ENCODE measurements at regions of chr4 and their contacts with region 1.

Region 1: GRCh38 chr4:152535903-152536544 is at the start of gene FBXW7:
- DNase-seq: peak; percentile 98 to 100 (median 100)
- H3K4me3 ChIP-seq: peak within 1 kb of the TSS; percentile 94
- H3K4me3 Mint-ChIP-seq: peak within 1 kb of the TSS; percentile 89 to 98 (median 96)
- H3K27ac ChIP-seq: peak within 1 kb of the TSS; percentile 98
- H3K27ac Mint-ChIP-seq: peak within 1 kb of the TSS; percentile 96 to 100 (median 99)
- H3K4me1 ChIP-seq: peaks cover 52% of the 10 kb centered on the region
- H3K4me1 Mint-ChIP-seq: peaks cover 68 to 75% (median 73%) of the 10 kb centered on the region in 3 donors
- H3K27me3 ChIP-seq: no peaks in the 10 kb centered on the region
- H3K27me3 Mint-ChIP-seq: peaks cover 0 to 7% of the 10 kb centered on the region in 2 donors
- total RNA-seq, gene FBXW7: 46.6 to 54.3 TPM

Region 2: GRCh38 chr4:152448038-152448707 is 87.9 kb before region 1 on chr4:
- CTCF ChIA-PET with region 1: no interaction called
- POLR2A ChIA-PET with region 1: no interaction called
- DNase-seq: no peak
- H3K4me3 ChIP-seq: no peak overlapping the region
- H3K4me3 Mint-ChIP-seq: peak overlapping the region in 1 of 7 donors; percentile 20
- H3K27ac ChIP-seq: no peak overlapping the region
- H3K27ac Mint-ChIP-seq: no peak overlapping the region
- H3K4me1 ChIP-seq: peaks cover 4% of the 10 kb centered on the region
- H3K4me1 Mint-ChIP-seq: peaks cover 34 to 52% (median 49%) of the 10 kb centered on the region in 3 donors
- H3K27me3 ChIP-seq: no peaks in the 10 kb centered on the region
- H3K27me3 Mint-ChIP-seq: no peaks in the 10 kb centered on the region

Region 3: GRCh38 chr4:152554742-152555141 is 18.7 kb after region 1 on chr4:
- CTCF ChIA-PET with region 1: interaction called, 28 read pairs
- POLR2A ChIA-PET with region 1: interaction called, 41 read pairs
- DNase-seq: no peak
- H3K4me3 ChIP-seq: peak overlapping the region; percentile 31
- H3K4me3 Mint-ChIP-seq: peak overlapping the region in 5 of 7 donors; percentile 38 to 74 (median 52)
- H3K27ac ChIP-seq: no peak overlapping the region
- H3K27ac Mint-ChIP-seq: peak overlapping the region; percentile 53 to 99 (median 92)
- H3K4me1 ChIP-seq: peaks cover 33% of the 10 kb centered on the region
- H3K4me1 Mint-ChIP-seq: peaks cover 32 to 62% (median 45%) of the 10 kb centered on the region in 3 donors
- H3K27me3 ChIP-seq: no peaks in the 10 kb centered on the region
- H3K27me3 Mint-ChIP-seq: peaks cover 0 to 1% of the 10 kb centered on the region in 2 donors

Region 4: DNA sequence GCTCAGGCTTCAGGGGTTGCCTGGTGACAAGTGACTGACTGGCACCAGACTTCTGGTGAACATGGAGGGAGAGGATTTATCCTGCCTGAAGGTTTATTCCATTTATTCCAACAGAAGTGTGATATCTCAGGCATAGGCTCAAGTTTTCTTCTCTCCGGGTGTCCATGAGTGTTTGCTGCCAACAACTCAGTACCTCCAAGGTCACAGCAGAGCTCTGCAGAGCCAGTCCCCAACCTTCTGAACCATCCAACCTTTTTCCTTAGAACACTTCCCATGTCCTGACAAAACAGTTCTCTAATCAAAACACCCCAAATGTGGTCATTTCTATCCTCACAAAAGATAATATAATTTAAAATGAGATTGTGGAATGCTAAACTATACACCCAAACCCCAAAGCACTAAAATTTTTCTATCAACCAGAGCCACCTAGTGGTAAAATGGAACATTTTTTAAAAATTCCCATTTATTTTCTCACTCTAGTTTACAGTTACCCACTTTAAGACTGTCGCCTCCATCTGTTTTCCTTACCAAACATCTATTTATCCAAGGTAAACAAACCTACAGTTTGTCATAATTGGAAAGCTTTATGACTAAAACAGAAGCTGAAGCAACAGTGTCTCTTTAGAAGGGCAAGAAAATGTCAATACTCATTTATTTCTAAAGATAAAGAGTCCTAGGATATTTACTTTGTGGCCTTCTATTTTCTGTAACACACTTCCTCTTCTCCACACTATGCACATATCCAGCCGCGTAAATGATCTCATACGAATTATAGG is 104.2 kb after region 1 on chr4:
- CTCF ChIA-PET with region 1: interaction called, 8 read pairs
- POLR2A ChIA-PET with region 1: interaction called, 13 read pairs
- DNase-seq: peak in 2 of 5 donors; percentile 12 to 29
- H3K4me3 ChIP-seq: no peak overlapping the region
- H3K4me3 Mint-ChIP-seq: no peak overlapping the region
- H3K27ac ChIP-seq: no peak overlapping the region
- H3K27ac Mint-ChIP-seq: peak overlapping the region in 1 of 8 donors; percentile 48
- H3K4me1 ChIP-seq: peaks cover 9% of the 10 kb centered on the region
- H3K4me1 Mint-ChIP-seq: peaks cover 18 to 26% (median 24%) of the 10 kb centered on the region in 3 donors
- H3K27me3 ChIP-seq: no peaks in the 10 kb centered on the region
- H3K27me3 Mint-ChIP-seq: no peaks in the 10 kb centered on the region

Region 5: DNA sequence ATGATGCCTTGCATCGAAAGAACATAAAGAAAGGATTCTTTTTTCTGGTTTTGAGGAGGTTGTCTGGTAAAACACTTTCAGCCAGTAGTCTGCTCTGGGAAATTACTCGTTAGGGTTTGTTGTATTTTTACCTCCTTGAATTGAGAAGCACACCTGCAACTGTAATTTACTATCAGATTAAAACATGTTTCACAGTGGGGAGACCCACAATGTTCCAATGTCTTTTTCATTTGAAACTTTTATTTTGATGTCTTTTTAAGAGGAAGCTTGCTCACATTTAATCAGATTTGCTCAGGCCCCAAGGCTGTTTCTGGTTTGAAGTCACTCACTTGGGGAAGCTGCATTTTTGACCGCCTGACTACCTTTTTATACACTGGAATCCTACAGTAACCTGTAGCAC is 131.8 kb after region 1 on chr4:
- CTCF ChIA-PET with region 1: no interaction called
- POLR2A ChIA-PET with region 1: no interaction called
- DNase-seq: no peak
- H3K4me3 ChIP-seq: no peak overlapping the region
- H3K4me3 Mint-ChIP-seq: no peak overlapping the region
- H3K27ac ChIP-seq: no peak overlapping the region
- H3K27ac Mint-ChIP-seq: no peak overlapping the region
- H3K4me1 ChIP-seq: peaks cover 5% of the 10 kb centered on the region
- H3K4me1 Mint-ChIP-seq: peaks cover 7 to 26% (median 21%) of the 10 kb centered on the region in 3 donors
- H3K27me3 ChIP-seq: no peaks in the 10 kb centered on the region
- H3K27me3 Mint-ChIP-seq: no peaks in the 10 kb centered on the region

Region 6: DNA sequence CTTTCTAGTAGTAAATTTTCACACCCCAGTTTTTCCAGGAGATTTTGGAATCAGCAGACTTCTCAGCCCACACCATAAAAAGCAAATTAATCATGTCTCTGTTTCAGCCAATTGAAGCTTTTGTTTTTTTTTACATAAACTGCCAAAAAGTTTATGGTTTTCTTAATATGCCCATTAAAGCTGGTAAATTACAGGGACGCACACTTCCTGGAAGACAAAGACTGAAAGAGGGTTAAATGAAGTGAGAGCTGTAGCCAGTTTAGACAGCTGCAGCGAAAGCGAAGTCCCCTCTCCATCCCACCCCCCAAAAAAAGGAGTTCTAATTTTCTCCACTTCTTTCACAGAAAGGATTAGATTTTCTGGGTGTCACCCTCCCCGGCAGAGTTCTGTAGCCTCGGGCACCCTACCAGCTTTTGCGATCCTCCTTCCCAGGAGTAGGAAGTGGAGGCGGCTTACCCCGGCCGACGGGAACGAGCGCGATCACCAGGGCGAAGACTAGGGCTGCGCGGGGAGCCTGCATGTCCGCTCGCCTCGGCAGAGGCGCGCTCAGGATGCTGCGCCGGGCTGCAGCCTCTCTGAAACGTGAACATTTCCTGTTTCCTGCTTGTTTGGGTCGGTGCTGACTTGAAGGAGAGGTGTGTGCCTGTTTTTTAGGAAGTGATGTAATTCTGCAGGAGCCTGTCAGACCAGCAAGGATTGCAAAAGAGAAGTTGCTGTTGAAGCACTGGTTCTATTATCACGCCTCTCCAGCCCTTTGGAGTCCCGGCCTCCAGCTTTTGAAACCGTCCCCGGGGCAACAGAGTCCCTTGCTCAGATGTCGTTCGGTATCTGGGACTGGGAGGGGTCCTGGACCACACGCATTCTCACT is 143.6 kb after region 1 on chr4 and contains the start of gene TMEM154:
- CTCF ChIA-PET with region 1: no interaction called
- POLR2A ChIA-PET with region 1: interaction called, 22 read pairs
- DNase-seq: peak; percentile 53 to 80 (median 71)
- H3K4me3 ChIP-seq: peak within 1 kb of the TSS; percentile 80
- H3K4me3 Mint-ChIP-seq: peak within 1 kb of the TSS; percentile 92 to 98 (median 95)
- H3K27ac ChIP-seq: peak within 1 kb of the TSS; percentile 60
- H3K27ac Mint-ChIP-seq: peak within 1 kb of the TSS; percentile 69 to 99 (median 94)
- H3K4me1 ChIP-seq: peaks cover 18% of the 10 kb centered on the region
- H3K4me1 Mint-ChIP-seq: peaks cover 41 to 54% (median 53%) of the 10 kb centered on the region in 3 donors
- H3K27me3 ChIP-seq: no peaks in the 10 kb centered on the region
- H3K27me3 Mint-ChIP-seq: peaks cover 0 to 1% of the 10 kb centered on the region in 2 donors
- total RNA-seq, gene TMEM154: 11.5 to 12.5 TPM

Region 7: GRCh38 chr4:152729466-152729865 is 193.4 kb after region 1 on chr4:
- CTCF ChIA-PET with region 1: no interaction called
- POLR2A ChIA-PET with region 1: no interaction called
- DNase-seq: no peak
- H3K4me3 ChIP-seq: no peak overlapping the region
- H3K4me3 Mint-ChIP-seq: no peak overlapping the region
- H3K27ac ChIP-seq: no peak overlapping the region
- H3K27ac Mint-ChIP-seq: no peak overlapping the region
- H3K4me1 ChIP-seq: no peaks in the 10 kb centered on the region
- H3K4me1 Mint-ChIP-seq: no peaks in the 10 kb centered on the region
- H3K27me3 ChIP-seq: no peaks in the 10 kb centered on the region
- H3K27me3 Mint-ChIP-seq: peaks cover 1 to 12% of the 10 kb centered on the region in 2 donors